ENCODE measurements at regions of chr22 and their contacts with region 1.

Region 1: DNA sequence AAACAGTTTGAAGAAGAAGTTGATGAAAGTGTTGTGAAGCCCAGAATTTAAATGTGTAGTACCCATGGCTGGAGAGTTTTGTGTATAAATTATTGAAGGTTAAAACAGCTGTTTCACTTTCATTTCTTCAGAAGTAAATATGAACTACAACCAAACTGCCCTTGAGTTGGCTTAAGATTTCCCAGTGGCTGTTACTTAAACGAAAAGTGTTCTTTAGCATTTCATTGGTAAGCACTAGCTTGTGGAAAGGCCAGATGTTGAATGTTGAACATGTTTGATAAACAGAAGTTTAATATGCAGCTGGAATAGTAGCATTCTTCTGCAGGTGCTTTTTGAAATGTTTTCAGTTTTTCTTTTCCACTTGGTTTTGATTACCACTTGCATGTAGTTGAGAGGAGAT is 83.2 kb upstream of the TNRC6B start:
- DNase-seq: peak; percentile 22
- ATAC-seq: peak; percentile 31
- H3K4me3 ChIP-seq: no peak overlapping the region
- H3K4me3 Mint-ChIP-seq: peak overlapping the region; percentile 26
- H3K27ac ChIP-seq: peak overlapping the region in 1 of 2 donors; percentile 47
- H3K27ac Mint-ChIP-seq: no peak overlapping the region
- H3K4me1 ChIP-seq: peaks cover 30 to 46% of the 10 kb centered on the region in 2 donors
- H3K4me1 Mint-ChIP-seq: peaks cover 63% of the 10 kb centered on the region
- H3K27me3 ChIP-seq: no peaks in the 10 kb centered on the region
- H3K27me3 Mint-ChIP-seq: no peaks in the 10 kb centered on the region
- CTCF ChIP-seq: no peak

Region 2: GRCh38 chr22:40050258-40050657 is 44.2 kb before region 1 on chr22:
- CTCF ChIA-PET with region 1: no interaction called
- POLR2A ChIA-PET with region 1: interaction called, 3 read pairs
- intact Hi-C with region 1: loop called (anchors 5 kb)
- DNase-seq: peak; percentile 87
- ATAC-seq: peak; percentile 86
- H3K4me3 ChIP-seq: peak overlapping the region; percentile 10 to 59 (median 32)
- H3K4me3 Mint-ChIP-seq: peak overlapping the region; percentile 82
- H3K27ac ChIP-seq: peak overlapping the region; percentile 71 to 83
- H3K27ac Mint-ChIP-seq: peak overlapping the region; percentile 93
- H3K4me1 ChIP-seq: peaks cover 85 to 92% of the 10 kb centered on the region in 2 donors
- H3K4me1 Mint-ChIP-seq: peaks cover 72% of the 10 kb centered on the region
- H3K27me3 ChIP-seq: no peaks in the 10 kb centered on the region
- H3K27me3 Mint-ChIP-seq: no peaks in the 10 kb centered on the region
- CTCF ChIP-seq: no peak

Region 3: GRCh38 chr22:40076702-40077645 is 17.5 kb before region 1 on chr22:
- CTCF ChIA-PET with region 1: no interaction called
- POLR2A ChIA-PET with region 1: no interaction called
- intact Hi-C with region 1: loop called (anchors 2 kb)
- DNase-seq: no peak
- ATAC-seq: no peak
- H3K4me3 ChIP-seq: no peak overlapping the region
- H3K4me3 Mint-ChIP-seq: peak overlapping the region; percentile 54
- H3K27ac ChIP-seq: peak overlapping the region in 1 of 2 donors; percentile 59
- H3K27ac Mint-ChIP-seq: peak overlapping the region; percentile 18
- H3K4me1 ChIP-seq: peaks cover 28 to 52% of the 10 kb centered on the region in 2 donors
- H3K4me1 Mint-ChIP-seq: peaks cover 50% of the 10 kb centered on the region
- H3K27me3 ChIP-seq: no peaks in the 10 kb centered on the region
- H3K27me3 Mint-ChIP-seq: no peaks in the 10 kb centered on the region
- CTCF ChIP-seq: no peak